Ascending aorta (tissue), 2 donors: ENCODE measurements at regions of chr1 and their contacts with region 1.

Region 1: DNA sequence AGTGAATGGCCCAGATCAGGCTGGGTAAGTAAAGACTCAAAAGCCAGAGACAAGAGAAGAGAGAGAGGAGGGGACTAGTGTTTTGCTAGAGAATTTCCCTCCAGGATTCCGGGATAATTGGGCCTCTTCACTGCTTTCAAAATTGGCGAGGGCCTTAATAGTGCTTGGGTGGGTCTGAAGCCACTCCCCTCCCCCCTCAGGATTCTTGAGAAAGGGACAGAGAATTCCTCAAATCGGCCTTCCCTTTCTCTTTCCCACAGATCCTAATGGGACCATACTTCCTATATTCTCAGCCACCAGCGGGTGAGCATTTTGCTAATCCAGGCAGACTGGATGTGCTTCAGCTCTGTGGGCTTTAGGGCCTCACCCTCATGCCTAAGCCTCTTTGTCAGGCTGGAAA is 11.9 kb downstream of the SFN start:
- DNase-seq: no peak
- H3K4me3 ChIP-seq: no peak overlapping the region
- H3K27ac ChIP-seq: no peak overlapping the region
- H3K4me1 ChIP-seq: peaks cover 0 to 3% of the 10 kb centered on the region in 2 donors
- H3K27me3 ChIP-seq: no peaks in the 10 kb centered on the region
- CTCF ChIP-seq: no peak

Region 2: GRCh38 chr1:26602378-26602959 is 272.4 kb before region 1 on chr1:
- intact Hi-C with region 1: loop called (anchors 5 kb)
- DNase-seq: no peak
- H3K4me3 ChIP-seq: no peak overlapping the region
- H3K27ac ChIP-seq: no peak overlapping the region
- H3K4me1 ChIP-seq: no peaks in the 10 kb centered on the region
- H3K27me3 ChIP-seq: no peaks in the 10 kb centered on the region
- CTCF ChIP-seq: peak; percentile 77 to 88 (median 85)

Region 3: DNA sequence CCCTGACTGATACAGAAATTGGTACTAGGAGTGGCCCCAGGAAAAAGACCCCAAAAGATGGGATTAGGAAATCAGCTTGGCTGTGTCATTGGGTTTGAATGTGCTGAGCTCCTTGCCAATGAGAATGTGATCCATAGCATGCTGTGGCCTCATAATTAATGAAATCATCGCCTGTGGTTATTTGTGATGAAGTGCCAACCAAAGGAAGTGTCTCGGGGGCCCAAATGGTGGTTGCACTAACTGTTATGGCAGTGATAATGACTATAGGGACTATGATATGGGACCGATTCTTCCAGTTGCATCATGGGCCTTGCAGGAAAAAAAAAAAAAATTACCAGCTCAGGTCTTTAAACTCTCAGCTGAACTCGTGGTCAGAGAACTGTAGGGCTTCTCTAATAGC is 63.8 kb before region 1 on chr1:
- intact Hi-C with region 1: loop called (anchors 2 kb)
- DNase-seq: no peak
- H3K4me3 ChIP-seq: no peak overlapping the region
- H3K27ac ChIP-seq: no peak overlapping the region
- H3K4me1 ChIP-seq: no peaks in the 10 kb centered on the region
- H3K27me3 ChIP-seq: no peaks in the 10 kb centered on the region
- CTCF ChIP-seq: no peak

Region 4: DNA sequence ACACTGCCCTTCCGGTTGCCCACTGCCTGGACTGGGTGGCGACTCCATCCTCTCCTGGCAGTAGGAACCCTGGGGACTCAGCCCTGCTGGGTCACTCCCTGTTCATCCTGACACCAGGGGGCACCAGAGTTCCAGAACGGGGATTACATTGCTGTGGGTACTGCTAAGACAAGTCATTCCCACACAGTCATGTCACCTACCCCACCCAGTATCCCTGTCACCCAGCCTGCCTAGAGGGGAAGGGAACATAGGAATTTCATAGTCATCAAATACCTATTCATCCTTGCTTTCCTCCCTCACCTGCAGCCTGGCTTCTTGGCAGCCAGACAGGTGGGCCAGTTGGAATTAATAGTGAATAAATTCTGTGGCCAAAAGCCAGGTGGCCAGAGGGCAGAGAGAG is 21.7 kb before region 1 on chr1:
- intact Hi-C with region 1: loop called (anchors 1 kb)
- DNase-seq: peak; percentile 60 to 95
- H3K4me3 ChIP-seq: no peak overlapping the region
- H3K27ac ChIP-seq: peak overlapping the region; percentile 18 to 36
- H3K4me1 ChIP-seq: peaks cover 0 to 8% of the 10 kb centered on the region in 2 donors
- H3K27me3 ChIP-seq: no peaks in the 10 kb centered on the region
- CTCF ChIP-seq: peak; percentile 81 to 86 (median 85)

Region 5: DNA sequence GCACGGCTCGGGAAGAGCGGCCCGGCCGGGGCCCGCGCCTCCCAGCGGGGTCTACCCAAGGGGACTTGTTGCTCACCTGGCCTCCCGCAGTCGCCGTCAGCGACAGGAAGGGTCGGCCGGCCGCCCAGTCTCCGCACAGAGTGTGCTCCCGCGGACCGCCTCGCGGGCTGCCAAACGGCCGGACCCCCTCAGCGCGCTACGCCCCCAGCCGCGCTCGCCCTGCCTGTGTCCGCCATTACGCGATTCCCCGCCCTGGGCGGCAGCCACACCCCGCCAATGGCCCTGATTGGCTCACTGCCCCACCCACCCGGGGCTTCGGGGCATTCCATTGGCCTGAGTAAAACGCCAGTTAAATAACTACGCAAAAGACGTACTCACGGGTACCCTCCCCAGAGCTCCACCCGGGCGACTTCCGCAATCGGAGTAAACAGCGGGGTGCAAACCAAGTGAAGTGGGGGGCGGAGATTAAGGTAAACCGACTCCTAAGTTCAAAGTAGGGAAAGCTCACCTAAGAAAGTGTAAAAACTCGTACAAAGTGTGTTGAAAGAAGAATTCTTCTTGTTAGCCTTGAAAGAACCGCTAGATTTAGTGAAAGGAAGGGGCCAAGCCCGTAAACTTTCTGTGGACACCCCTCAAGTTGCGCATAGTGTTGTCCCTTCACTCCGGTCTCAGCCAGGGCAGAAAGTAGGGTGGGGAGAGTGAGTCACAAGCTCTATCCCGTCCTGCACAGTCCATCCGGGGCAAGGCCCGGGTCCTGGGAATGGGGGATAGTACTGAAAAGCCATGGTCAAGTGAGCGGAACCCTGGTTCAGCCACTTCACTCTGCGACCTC is 615.2 kb after region 1 on chr1 and contains the start of gene WASF2:
- intact Hi-C with region 1: no loop called
- DNase-seq: peak; percentile 88 to 99
- H3K4me3 ChIP-seq: peak within 1 kb of the TSS; percentile 71 to 97
- H3K27ac ChIP-seq: peak within 1 kb of the TSS; percentile 92 to 99
- H3K4me1 ChIP-seq: peaks cover 20 to 26% of the 10 kb centered on the region in 2 donors
- H3K27me3 ChIP-seq: no peaks in the 10 kb centered on the region
- CTCF ChIP-seq: no peak
- total RNA-seq, gene WASF2: 70.4 TPM